Prostate gland (tissue), 2 donors: ENCODE measurements at regions of chr19 and their contacts with region 1.

Region 1: DNA sequence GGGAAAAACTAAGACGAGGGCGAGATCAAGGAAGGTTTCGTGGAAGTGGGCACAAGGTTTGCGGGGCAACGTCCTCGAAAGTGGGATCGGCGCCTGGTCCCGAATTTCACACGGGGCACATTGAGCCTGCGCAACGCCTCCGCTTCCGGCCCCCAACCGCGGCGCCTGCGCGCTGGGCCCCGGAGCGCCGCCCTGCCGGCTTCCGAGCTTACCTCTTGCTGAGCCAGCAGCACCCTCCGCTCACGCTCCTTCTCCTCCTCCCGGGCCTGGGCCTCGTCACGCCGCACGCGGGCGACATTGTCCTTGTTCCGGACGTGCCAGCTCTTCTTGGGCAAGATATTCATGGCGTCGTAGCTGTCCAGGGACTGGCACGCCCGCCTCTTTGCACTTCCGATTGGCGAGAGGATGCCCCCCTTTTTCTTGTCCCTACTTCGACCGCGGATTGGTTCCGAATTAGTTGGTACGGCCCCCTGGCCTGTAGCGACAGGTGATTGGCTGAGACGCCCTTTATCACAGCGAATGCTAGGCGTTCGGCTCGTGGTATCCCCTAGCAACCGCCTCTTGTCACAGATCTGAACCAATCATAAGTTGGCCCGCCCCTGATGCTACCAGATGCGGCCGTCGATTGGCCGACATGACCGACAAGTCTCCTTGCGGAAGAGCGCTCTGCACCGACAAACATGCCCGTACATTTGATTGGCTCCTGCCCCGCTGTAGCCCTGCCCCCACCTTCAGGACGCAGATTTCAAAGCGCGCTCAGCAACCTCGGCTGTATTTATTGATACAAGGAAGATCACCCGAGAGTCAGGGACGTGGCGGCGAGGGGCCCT is at the start of gene LENG1:
- DNase-seq: peak; percentile 100
- H3K4me3 ChIP-seq: peak within 1 kb of the TSS; percentile 71 to 89
- H3K27ac ChIP-seq: peak within 1 kb of the TSS; percentile 88 to 95
- H3K4me1 ChIP-seq: peaks cover 26% of the 10 kb centered on the region
- H3K27me3 ChIP-seq: no peaks in the 10 kb centered on the region
- CTCF ChIP-seq: peak; percentile 3 to 75 (median 56)
- POLR2A ChIP-seq: peak; percentile 55
- total RNA-seq, gene LENG1: 7.6 to 14.7 TPM

Region 2: DNA sequence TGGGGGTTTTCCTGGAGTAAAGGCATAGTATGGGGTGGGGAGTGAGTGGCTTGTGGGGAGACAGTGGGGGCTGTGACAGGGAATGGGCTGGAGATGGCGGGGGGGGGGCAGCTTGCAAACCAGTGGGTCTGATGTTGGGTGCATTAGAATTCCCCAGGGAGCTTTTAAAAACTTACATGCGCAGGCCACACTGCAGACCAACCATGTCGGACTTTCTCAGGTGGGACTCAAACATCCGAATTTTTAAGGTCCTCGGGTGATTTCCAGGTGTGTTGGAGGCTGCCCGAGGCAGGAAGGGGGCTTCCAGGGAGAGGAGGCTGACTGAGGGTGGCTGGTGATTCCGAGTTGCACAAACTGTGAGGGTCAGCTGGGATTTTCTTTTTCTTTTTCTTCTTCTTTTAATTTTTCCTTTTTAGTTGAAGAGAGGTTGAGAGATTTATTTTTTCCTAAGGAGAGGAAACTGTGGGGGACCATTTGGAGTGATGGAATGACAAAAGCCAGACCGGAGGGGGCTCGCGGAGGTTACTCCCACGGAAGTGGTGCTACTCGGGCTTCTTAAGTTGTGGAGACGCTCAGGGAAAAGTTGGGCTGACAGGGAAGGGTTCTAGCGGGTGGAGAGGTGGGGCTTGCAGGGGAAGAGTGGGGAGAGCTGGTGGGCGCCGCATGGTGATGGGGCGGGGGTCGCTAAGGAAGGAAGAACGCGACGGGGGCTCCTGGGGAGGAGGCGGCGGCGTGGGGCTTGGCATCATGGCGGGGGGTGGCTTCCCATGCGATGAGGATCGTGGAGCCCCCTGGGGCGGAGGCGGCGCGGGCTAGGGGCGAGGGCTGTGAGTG is 197.8 kb before region 1 on chr19:
- intact Hi-C with region 1: no loop called
- DNase-seq: no peak
- H3K4me3 ChIP-seq: no peak overlapping the region
- H3K27ac ChIP-seq: no peak overlapping the region
- H3K4me1 ChIP-seq: no peaks in the 10 kb centered on the region
- H3K27me3 ChIP-seq: peaks cover 26% of the 10 kb centered on the region
- CTCF ChIP-seq: no peak
- POLR2A ChIP-seq: no peak

Region 3: DNA sequence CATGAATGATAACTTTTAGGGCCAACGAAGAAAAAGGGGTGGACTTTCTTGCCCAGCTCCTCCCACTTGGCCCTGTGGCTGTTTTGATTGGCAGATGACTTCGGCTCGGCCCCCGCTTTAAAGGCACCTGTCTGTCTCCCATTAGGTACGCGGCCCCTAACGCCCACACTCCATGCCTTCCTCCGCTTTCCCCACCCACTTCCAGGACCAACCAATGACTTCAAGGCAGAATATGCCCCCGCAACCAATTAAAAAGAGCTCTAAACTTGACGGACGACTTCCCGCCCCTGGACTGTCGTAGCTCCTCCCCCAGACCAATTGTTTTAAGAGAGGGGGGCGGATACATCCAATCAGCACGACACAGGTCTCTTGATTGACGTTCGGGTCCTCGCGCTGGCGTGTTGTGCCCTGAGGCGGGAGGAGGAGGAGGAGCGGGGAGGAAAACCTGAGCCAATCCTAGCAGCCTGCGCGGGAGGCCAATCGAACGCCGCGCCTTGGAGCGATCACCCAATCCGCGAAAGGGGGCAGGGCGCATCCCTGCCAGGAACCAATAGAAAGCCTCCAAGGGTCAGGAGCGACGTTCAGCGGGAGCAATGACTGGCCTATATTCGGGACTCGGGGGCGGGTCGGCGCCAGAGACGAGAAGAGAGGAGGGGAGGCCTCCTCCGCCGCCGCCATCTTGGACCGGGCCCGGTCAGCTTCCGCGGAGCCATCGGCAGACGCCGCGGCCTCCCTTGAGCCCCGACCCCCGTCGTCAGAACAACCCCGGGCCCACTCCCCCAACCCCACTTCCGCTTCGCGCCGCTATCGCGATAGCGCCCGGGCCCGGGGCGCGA is 22.3 kb before region 1 on chr19 and contains the start of gene CNOT3:
- intact Hi-C with region 1: loop called (anchors 2 kb)
- DNase-seq: peak; percentile 99
- H3K4me3 ChIP-seq: peak within 1 kb of the TSS; percentile 94 to 99
- H3K27ac ChIP-seq: peak within 1 kb of the TSS; percentile 92 to 97
- H3K4me1 ChIP-seq: peaks cover 7% of the 10 kb centered on the region
- H3K27me3 ChIP-seq: no peaks in the 10 kb centered on the region
- CTCF ChIP-seq: no peak
- POLR2A ChIP-seq: peak; percentile 94
- total RNA-seq, gene CNOT3: 22.8 to 54.4 TPM

Region 4: DNA sequence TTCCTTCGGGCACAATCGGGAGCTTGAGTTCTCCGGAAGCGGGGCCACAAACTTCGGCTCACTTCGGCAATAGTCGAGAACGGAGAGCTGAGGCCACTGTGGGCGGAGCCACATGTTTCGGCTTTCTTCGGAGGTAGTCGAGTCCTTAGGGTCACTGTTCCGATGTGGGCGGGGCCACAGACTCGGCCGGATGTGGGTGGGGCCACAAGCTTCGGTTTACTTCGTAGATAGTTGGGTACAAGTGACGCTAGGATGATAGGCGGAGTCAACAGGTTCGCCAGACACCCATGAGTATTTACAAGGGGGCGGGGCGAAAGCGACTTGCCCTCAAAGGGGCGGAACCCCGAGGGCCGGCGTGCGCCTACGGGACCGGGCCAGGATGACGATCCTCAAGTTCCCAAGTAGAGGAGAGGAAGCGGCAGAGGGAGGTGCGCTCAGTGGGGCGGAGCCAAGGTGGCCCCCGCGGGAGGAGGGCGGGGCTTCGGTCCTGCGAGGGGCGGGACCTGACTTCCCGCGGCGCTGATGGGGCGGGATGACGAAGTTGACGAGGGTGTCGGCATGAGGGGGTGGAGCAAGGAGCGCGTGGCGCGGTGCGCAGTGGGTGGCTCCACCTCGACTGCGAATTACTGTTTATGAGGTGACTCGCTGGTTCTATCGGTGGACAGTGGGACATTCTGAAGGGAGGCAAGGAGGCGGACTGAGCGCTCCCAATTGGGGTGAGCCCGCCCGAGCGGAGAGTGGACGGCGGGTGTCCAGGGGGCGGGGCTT is 30.4 kb after region 1 on chr19:
- intact Hi-C with region 1: loop called (anchors 2 kb)
- DNase-seq: peak; percentile 100
- H3K4me3 ChIP-seq: peak overlapping the region; percentile 83 to 91
- H3K27ac ChIP-seq: peak overlapping the region; percentile 96 to 98
- H3K4me1 ChIP-seq: peaks cover 4% of the 10 kb centered on the region
- H3K27me3 ChIP-seq: no peaks in the 10 kb centered on the region
- CTCF ChIP-seq: no peak
- POLR2A ChIP-seq: no peak

Region 5: GRCh38 chr19:54248016-54248601 is 88.5 kb after region 1 on chr19:
- intact Hi-C with region 1: no loop called
- DNase-seq: no peak
- H3K4me3 ChIP-seq: no peak overlapping the region
- H3K27ac ChIP-seq: no peak overlapping the region
- H3K4me1 ChIP-seq: no peaks in the 10 kb centered on the region
- H3K27me3 ChIP-seq: no peaks in the 10 kb centered on the region
- CTCF ChIP-seq: no peak
- POLR2A ChIP-seq: no peak